ENCODE measurements at regions of chr11 and their contacts with region 1.

Region 1: GRCh38 chr11:107851704-107852310 is 6.8 kb downstream of the SLC35F2 start:
- DNase-seq: no peak
- H3K4me3 ChIP-seq: no peak overlapping the region
- H3K27ac ChIP-seq: no peak overlapping the region
- H3K4me1 ChIP-seq: peaks cover 3% of the 10 kb centered on the region
- H3K27me3 ChIP-seq: no peaks in the 10 kb centered on the region
- CTCF ChIP-seq: no peak
- POLR2A ChIP-seq: no peak

Region 2: DNA sequence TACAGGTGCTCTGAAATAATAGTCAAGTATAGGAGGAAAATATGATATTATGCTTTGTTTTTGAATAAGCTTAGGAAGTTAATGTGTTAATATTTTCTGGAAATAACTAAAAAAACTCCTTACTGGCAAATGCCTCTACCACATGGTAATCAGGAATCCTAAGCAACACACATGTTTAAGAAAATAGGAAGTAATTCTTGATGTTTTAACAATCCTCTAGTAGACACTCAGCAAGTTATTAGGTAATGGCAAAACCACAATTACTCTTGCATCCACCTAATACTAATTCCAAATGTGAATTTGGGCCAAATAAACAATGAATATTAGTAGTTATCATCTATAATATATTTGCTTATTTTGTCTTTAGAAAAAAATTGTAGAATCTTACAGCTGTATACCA is 46.8 kb before region 1 on chr11:
- CTCF ChIA-PET with region 1: interaction called, 4 read pairs
- POLR2A ChIA-PET with region 1: no interaction called
- dilution Hi-C with region 1: no loop called
- intact Hi-C with region 1: loop called (anchors 2 kb)
- DNase-seq: no peak
- H3K4me3 ChIP-seq: no peak overlapping the region
- H3K27ac ChIP-seq: no peak overlapping the region
- H3K4me1 ChIP-seq: no peaks in the 10 kb centered on the region
- H3K27me3 ChIP-seq: no peaks in the 10 kb centered on the region
- CTCF ChIP-seq: no peak
- POLR2A ChIP-seq: no peak

Region 3: GRCh38 chr11:107830915-107831540 is 20.8 kb before region 1 on chr11:
- CTCF ChIA-PET with region 1: interaction called, 10 read pairs
- POLR2A ChIA-PET with region 1: no interaction called
- dilution Hi-C with region 1: no loop called
- intact Hi-C with region 1: no loop called
- DNase-seq: peak; percentile 61
- H3K4me3 ChIP-seq: no peak overlapping the region
- H3K27ac ChIP-seq: peak overlapping the region; percentile 12
- H3K4me1 ChIP-seq: peaks cover 18% of the 10 kb centered on the region
- H3K27me3 ChIP-seq: no peaks in the 10 kb centered on the region
- CTCF ChIP-seq: no peak
- POLR2A ChIP-seq: no peak

Region 4: DNA sequence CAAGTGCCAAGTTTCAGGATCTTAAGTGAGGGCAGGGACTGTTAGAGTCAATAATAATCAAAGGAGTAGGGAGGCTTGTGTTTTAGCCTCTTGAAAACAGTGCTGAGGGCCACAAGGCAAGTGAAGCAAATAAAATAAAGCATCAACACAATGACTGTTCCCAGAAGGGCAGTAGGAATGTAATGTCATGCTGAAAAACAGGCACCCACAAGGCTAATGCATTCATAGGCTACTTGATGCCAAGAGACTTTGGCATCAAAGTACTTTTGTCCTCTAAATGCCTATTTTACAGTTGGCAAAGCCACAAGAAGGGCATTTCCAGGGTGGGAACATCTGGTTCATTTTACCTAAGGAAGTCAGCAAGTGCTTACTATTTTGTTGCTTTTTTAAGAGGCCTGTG is 99.3 kb after region 1 on chr11:
- CTCF ChIA-PET with region 1: no interaction called
- POLR2A ChIA-PET with region 1: no interaction called
- dilution Hi-C with region 1: no loop called
- intact Hi-C with region 1: no loop called
- DNase-seq: no peak
- H3K4me3 ChIP-seq: no peak overlapping the region
- H3K27ac ChIP-seq: no peak overlapping the region
- H3K4me1 ChIP-seq: no peaks in the 10 kb centered on the region
- H3K27me3 ChIP-seq: no peaks in the 10 kb centered on the region
- CTCF ChIP-seq: no peak
- POLR2A ChIP-seq: no peak